CD8-positive, alpha-beta T cell (primary cell): ENCODE measurements at regions of chr16 and their contacts with region 1.

Region 1: DNA sequence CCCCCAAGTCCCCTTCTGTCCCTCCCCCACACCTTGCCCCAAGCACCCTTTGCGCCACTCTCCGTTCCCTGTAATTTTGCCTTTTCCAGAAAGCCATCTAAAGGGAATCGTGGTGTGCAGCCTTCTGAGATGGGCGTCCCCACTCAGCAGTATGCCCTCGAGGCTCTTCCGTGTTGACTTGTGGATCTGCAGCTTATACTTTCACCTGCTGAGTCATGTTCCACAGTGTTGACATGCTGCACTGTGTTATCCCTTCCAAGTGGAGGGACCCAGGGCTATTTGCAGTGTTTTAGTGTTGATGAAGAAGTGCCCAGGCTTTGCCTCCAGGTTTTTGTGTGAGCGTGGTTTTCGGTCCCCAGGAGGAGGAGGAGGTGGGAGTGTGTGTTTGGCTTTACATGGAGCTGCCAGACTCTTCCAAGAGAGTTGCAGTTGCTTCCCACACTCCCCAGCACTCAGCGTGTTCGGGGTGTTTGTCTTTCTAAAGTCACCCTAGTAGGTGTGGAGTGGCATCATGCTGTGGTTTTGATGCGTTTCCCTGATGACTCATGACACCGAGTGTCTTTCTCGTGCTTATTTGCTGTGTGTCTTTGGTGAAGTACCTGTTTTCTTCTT is 32.1 kb upstream of the JPT2 start:
- DNase-seq: peak in 7 of 9 experiments; percentile 17 to 69 (median 49)
- ATAC-seq: peak; percentile 62
- H3K4me3 ChIP-seq: no peak overlapping the region
- H3K4me3 Mint-ChIP-seq: no peak overlapping the region
- H3K27ac ChIP-seq: no peak overlapping the region
- H3K27ac Mint-ChIP-seq: peak overlapping the region; percentile 58
- H3K4me1 ChIP-seq: peaks cover 7% of the 10 kb centered on the region
- H3K4me1 Mint-ChIP-seq: peaks cover 15% of the 10 kb centered on the region
- H3K27me3 ChIP-seq: no peaks in the 10 kb centered on the region
- H3K27me3 Mint-ChIP-seq: no peaks in the 10 kb centered on the region
- CTCF ChIP-seq: no peak

Region 2: GRCh38 chr16:1584926-1585482 is 61.0 kb before region 1 on chr16:
- CTCF ChIA-PET with region 1: no interaction called
- POLR2A ChIA-PET with region 1: no interaction called
- intact Hi-C with region 1: loop called in 1 of 2 experiments (anchors 5 kb)
- DNase-seq: no peak
- ATAC-seq: no peak
- H3K4me3 ChIP-seq: no peak overlapping the region
- H3K4me3 Mint-ChIP-seq: no peak overlapping the region
- H3K27ac ChIP-seq: no peak overlapping the region
- H3K27ac Mint-ChIP-seq: peak overlapping the region; percentile 32
- H3K4me1 ChIP-seq: no peaks in the 10 kb centered on the region
- H3K4me1 Mint-ChIP-seq: no peaks in the 10 kb centered on the region
- H3K27me3 ChIP-seq: no peaks in the 10 kb centered on the region
- H3K27me3 Mint-ChIP-seq: no peaks in the 10 kb centered on the region
- CTCF ChIP-seq: no peak

Region 3: GRCh38 chr16:1677802-1678496 is 31.9 kb after region 1 on chr16 and contains the start of gene JPT2:
- CTCF ChIA-PET with region 1: no interaction called
- POLR2A ChIA-PET with region 1: no interaction called
- intact Hi-C with region 1: no loop called
- DNase-seq: peak; percentile 87 to 98 (median 95)
- ATAC-seq: peak; percentile 97
- H3K4me3 ChIP-seq: peak within 1 kb of the TSS; percentile 54 to 57
- H3K4me3 Mint-ChIP-seq: peak within 1 kb of the TSS; percentile 88
- H3K27ac ChIP-seq: peak within 1 kb of the TSS; percentile 31 to 37
- H3K27ac Mint-ChIP-seq: peak within 1 kb of the TSS; percentile 62
- H3K4me1 ChIP-seq: peaks cover 15% of the 10 kb centered on the region
- H3K4me1 Mint-ChIP-seq: peaks cover 27% of the 10 kb centered on the region
- H3K27me3 ChIP-seq: no peaks in the 10 kb centered on the region
- H3K27me3 Mint-ChIP-seq: no peaks in the 10 kb centered on the region
- CTCF ChIP-seq: no peak
- total RNA-seq, gene JPT2: 1.4 to 2.8 TPM